ENCODE measurements at regions of chr6 and their contacts with region 1.

Region 1: DNA sequence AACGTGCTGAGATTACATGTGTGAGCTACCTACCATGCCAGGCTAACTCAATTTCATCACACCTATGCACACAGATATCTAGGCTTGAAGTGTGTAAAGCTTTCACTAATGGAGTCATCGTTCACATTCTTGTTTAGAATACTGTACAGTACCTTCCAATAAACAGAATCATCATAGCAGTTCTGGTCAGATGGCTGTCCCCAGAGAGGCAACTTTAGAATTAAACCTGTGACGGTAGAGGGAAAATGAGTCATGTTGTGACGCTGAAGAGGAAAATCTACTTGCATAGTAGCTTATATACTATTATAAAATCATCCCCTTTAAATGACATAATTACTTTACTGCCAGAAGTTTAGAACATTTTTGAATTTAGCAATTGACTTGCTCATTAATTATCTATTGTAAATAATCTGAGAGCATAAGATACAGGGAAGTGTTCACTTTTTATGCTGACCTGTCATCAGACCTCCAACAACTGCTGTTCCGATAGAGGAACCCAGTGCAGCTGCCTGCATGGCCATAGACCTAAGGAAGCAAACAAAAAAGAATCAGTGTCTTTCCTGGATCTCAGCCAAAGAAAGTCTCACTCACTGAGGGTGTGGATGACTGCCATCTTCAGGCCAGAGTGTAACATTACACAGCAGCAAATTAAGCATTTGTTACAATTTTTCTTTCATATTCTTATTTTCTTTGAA is 29.8 kb downstream of the RHAG start:
- DNase-seq: peak; percentile 85 to 95 (median 92)
- H3K4me3 ChIP-seq: no peak overlapping the region
- H3K27ac ChIP-seq: no peak overlapping the region
- H3K4me1 ChIP-seq: no peaks in the 10 kb centered on the region
- H3K27me3 ChIP-seq: peaks cover 0 to 3% (median 0%) of the 10 kb centered on the region in 5 experiments

Region 2: DNA sequence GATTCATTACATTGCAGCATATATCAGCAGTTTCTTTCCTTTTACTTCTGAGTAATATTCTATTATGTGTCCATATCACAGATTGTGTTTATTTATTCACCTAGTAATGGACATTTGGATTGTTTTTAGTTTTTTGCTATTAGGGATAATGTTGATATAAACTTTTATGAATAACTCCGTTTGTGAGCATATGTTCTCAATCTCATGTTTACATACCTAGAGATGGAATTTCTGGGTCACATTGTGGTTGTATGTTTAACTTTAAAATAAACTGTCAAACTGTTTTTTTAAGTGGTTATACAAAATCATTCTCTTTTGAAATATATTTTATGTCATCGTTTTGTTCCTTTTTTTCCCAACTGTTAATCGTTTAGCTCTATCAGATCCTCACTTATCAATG is 455.4 kb before region 1 on chr6:
- CTCF ChIA-PET with region 1: no interaction called
- POLR2A ChIA-PET with region 1: no interaction called
- DNase-seq: no peak
- H3K4me3 ChIP-seq: no peak overlapping the region
- H3K27ac ChIP-seq: no peak overlapping the region
- H3K4me1 ChIP-seq: no peaks in the 10 kb centered on the region
- H3K27me3 ChIP-seq: no peaks in the 10 kb centered on the region

Region 3: GRCh38 chr6:49453221-49453620 is 153.6 kb before region 1 on chr6:
- CTCF ChIA-PET with region 1: interaction called, 16 read pairs
- POLR2A ChIA-PET with region 1: no interaction called
- DNase-seq: peak in 2 of 3 donors; percentile 10 to 18
- H3K4me3 ChIP-seq: no peak overlapping the region
- H3K27ac ChIP-seq: no peak overlapping the region
- H3K4me1 ChIP-seq: no peaks in the 10 kb centered on the region
- H3K27me3 ChIP-seq: no peaks in the 10 kb centered on the region

Measured in common myeloid progenitor, CD34-positive (primary cell).